ENCODE measurements at regions of chr1 and their contacts with region 1.

Region 1: GRCh38 chr1:183480971-183481441 is 8.7 kb downstream of the SMG7 start:
- DNase-seq: peak; percentile 54
- ATAC-seq: peak; percentile 69
- H3K4me3 ChIP-seq: peak overlapping the region in 1 of 5 experiments; percentile 18
- H3K4me3 Mint-ChIP-seq: peak overlapping the region; percentile 36
- H3K27ac ChIP-seq: peak overlapping the region in 1 of 2 donors; percentile 56
- H3K27ac Mint-ChIP-seq: peak overlapping the region; percentile 51
- H3K4me1 ChIP-seq: peaks cover 44 to 59% of the 10 kb centered on the region in 2 donors
- H3K4me1 Mint-ChIP-seq: peaks cover 65% of the 10 kb centered on the region
- H3K27me3 ChIP-seq: no peaks in the 10 kb centered on the region
- H3K27me3 Mint-ChIP-seq: no peaks in the 10 kb centered on the region
- CTCF ChIP-seq: no peak

Region 2: GRCh38 chr1:183493548-183494246 is 12.7 kb after region 1 on chr1:
- CTCF ChIA-PET with region 1: no interaction called
- POLR2A ChIA-PET with region 1: no interaction called
- intact Hi-C with region 1: loop called (anchors 2 kb)
- DNase-seq: no peak
- ATAC-seq: no peak
- H3K4me3 ChIP-seq: no peak overlapping the region
- H3K4me3 Mint-ChIP-seq: no peak overlapping the region
- H3K27ac ChIP-seq: no peak overlapping the region
- H3K27ac Mint-ChIP-seq: no peak overlapping the region
- H3K4me1 ChIP-seq: peaks cover 10 to 13% of the 10 kb centered on the region in 2 donors
- H3K4me1 Mint-ChIP-seq: peaks cover 50% of the 10 kb centered on the region
- H3K27me3 ChIP-seq: no peaks in the 10 kb centered on the region
- H3K27me3 Mint-ChIP-seq: no peaks in the 10 kb centered on the region
- CTCF ChIP-seq: no peak

Region 3: GRCh38 chr1:183514235-183514634 is 33.2 kb after region 1 on chr1:
- CTCF ChIA-PET with region 1: no interaction called
- POLR2A ChIA-PET with region 1: no interaction called
- intact Hi-C with region 1: loop called (anchors 5 kb)
- DNase-seq: no peak
- ATAC-seq: no peak
- H3K4me3 ChIP-seq: no peak overlapping the region
- H3K4me3 Mint-ChIP-seq: no peak overlapping the region
- H3K27ac ChIP-seq: no peak overlapping the region
- H3K27ac Mint-ChIP-seq: no peak overlapping the region
- H3K4me1 ChIP-seq: no peaks in the 10 kb centered on the region
- H3K4me1 Mint-ChIP-seq: peaks cover 11% of the 10 kb centered on the region
- H3K27me3 ChIP-seq: no peaks in the 10 kb centered on the region
- H3K27me3 Mint-ChIP-seq: no peaks in the 10 kb centered on the region
- CTCF ChIP-seq: no peak

Measured in B cell (primary cell).